ENCODE measurements at regions of chr19 and their contacts with region 1.

Region 1: DNA sequence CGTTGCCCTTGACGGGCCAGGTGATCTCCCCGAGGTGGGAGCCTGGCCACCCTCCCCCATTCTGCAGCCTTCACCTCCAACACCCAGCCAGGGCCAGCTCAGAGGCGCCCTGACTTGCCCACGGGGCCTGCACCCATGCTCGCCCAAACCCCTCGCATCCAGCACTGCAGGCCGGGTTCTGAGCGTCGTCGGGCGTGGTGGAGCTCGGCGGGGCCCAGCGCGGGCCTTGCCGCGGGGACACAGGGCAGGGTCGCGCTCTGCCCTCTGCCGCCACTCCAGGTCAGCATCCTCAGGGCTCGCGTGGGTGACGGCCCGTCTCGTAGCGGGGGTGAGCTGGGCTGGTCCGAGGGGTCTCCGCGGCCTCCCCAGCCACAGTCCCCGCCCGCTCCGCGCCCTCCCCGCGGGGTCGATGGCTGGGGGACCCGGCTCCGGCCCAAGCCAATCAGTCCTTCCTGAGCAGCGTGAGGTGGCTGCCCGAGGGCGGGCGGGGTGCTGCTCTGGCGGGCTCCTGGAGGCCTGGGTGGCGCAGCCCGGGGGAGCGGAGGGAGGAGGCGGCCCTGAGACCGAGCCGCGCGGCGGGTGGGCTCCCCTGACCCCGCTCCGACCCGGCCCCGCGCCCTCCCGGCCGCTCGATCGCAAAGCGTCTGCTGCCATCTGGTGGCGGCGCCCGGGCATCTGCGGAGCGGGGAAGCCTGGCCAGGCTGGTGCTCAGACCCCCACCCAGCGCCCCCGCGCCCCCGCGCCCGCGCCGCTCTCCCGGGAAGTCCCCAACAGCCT is 61.4 kb downstream of the CCNE1 start:
- DNase-seq: peak; percentile 83
- ATAC-seq: peak; percentile 88
- H3K4me3 ChIP-seq: peak overlapping the region in 4 of 5 experiments; percentile 31 to 67 (median 54)
- H3K4me3 Mint-ChIP-seq: peak overlapping the region; percentile 84
- H3K27ac ChIP-seq: no peak overlapping the region
- H3K27ac Mint-ChIP-seq: no peak overlapping the region
- H3K4me1 ChIP-seq: peaks cover 17 to 44% of the 10 kb centered on the region in 2 donors
- H3K4me1 Mint-ChIP-seq: peaks cover 13% of the 10 kb centered on the region
- H3K27me3 ChIP-seq: peaks cover 0 to 27% (median 6%) of the 10 kb centered on the region in 4 experiments
- H3K27me3 Mint-ChIP-seq: peaks cover 23% of the 10 kb centered on the region
- CTCF ChIP-seq: peak; percentile 95

Region 2: DNA sequence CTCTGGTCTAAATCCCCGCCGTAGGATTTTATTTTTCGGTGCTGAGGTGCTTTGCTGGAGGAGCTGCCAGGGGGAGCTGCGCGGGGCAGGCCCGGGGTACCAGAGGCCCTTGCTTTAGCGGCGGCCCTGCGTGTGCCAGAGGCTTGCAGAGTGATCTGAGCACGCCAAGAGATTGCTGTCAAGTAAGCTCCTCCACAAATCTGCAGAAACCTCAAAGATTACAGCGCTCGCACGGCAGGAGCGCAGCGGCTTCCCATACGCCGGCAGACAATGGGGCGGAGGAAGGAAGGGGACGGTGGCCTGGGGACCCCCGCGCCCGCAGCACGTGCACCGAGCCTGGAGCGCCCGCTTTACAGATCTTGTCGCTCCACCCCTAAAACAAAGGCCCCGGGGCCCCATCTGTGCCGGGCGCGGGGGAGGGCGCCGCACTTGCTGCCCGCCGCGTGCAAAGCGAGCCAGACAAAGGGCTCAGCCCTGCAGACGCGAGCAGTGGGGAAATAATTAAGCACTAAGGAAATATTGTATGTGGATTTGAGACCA is 149.0 kb before region 1 on chr19:
- CTCF ChIA-PET with region 1: interaction called, 18 read pairs
- POLR2A ChIA-PET with region 1: no interaction called
- intact Hi-C with region 1: no loop called
- DNase-seq: peak; percentile 32
- ATAC-seq: no peak
- H3K4me3 ChIP-seq: peak overlapping the region in 2 of 5 experiments; percentile 9 to 10
- H3K4me3 Mint-ChIP-seq: peak overlapping the region; percentile 41
- H3K27ac ChIP-seq: no peak overlapping the region
- H3K27ac Mint-ChIP-seq: no peak overlapping the region
- H3K4me1 ChIP-seq: peaks cover 8 to 12% of the 10 kb centered on the region in 2 donors
- H3K4me1 Mint-ChIP-seq: peaks cover 8% of the 10 kb centered on the region
- H3K27me3 ChIP-seq: peaks cover 0 to 38% (median 15%) of the 10 kb centered on the region in 4 experiments
- H3K27me3 Mint-ChIP-seq: peaks cover 43% of the 10 kb centered on the region
- CTCF ChIP-seq: no peak

Region 3: DNA sequence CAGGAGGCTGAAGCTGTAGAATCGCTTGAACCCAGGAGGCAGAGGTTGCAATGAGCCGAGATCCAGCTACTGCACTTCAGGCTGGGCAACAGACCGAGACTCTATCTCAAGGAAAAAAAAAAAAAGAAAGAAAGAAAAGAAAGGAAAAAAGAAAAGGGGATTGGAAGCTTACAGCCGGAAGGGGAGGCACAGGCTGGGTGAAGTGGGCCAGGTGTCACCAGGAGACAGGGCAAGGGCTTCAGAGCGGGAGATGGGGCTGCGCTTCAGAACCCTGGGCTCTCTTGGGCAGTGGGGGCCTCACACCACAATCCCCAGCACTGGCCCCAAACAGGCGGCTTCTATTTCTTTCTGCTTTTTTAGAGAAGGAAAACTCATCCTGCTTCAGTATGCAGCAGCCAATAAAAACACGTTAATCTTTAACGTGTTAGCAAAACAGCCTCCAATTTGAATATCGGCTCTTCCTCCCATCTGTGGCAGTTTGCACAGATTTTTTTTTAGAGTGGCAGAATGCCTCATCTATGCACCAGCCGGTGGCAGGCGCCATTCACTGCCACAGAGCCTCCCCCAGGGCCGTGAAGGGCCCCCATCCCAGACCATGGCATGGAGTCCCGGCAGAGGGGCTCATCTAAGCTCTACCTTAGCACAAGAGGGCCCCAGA is 111.5 kb before region 1 on chr19:
- CTCF ChIA-PET with region 1: interaction called, 71 read pairs
- POLR2A ChIA-PET with region 1: no interaction called
- intact Hi-C with region 1: loop called (anchors 1 kb)
- DNase-seq: no peak
- ATAC-seq: no peak
- H3K4me3 ChIP-seq: no peak overlapping the region
- H3K4me3 Mint-ChIP-seq: no peak overlapping the region
- H3K27ac ChIP-seq: no peak overlapping the region
- H3K27ac Mint-ChIP-seq: no peak overlapping the region
- H3K4me1 ChIP-seq: peaks cover 8% of the 10 kb centered on the region in 2 donors
- H3K4me1 Mint-ChIP-seq: peaks cover 3% of the 10 kb centered on the region
- H3K27me3 ChIP-seq: peaks cover 0 to 6% (median 0%) of the 10 kb centered on the region in 4 experiments
- H3K27me3 Mint-ChIP-seq: peaks cover 13% of the 10 kb centered on the region
- CTCF ChIP-seq: no peak

Region 4: GRCh38 chr19:29893606-29894284 is 20.5 kb after region 1 on chr19:
- CTCF ChIA-PET with region 1: no interaction called
- POLR2A ChIA-PET with region 1: no interaction called
- intact Hi-C with region 1: no loop called
- DNase-seq: no peak
- ATAC-seq: no peak
- H3K4me3 ChIP-seq: no peak overlapping the region
- H3K4me3 Mint-ChIP-seq: no peak overlapping the region
- H3K27ac ChIP-seq: no peak overlapping the region
- H3K27ac Mint-ChIP-seq: no peak overlapping the region
- H3K4me1 ChIP-seq: no peaks in the 10 kb centered on the region
- H3K4me1 Mint-ChIP-seq: no peaks in the 10 kb centered on the region
- H3K27me3 ChIP-seq: no peaks in the 10 kb centered on the region
- H3K27me3 Mint-ChIP-seq: peaks cover 6% of the 10 kb centered on the region
- CTCF ChIP-seq: no peak

Region 5: DNA sequence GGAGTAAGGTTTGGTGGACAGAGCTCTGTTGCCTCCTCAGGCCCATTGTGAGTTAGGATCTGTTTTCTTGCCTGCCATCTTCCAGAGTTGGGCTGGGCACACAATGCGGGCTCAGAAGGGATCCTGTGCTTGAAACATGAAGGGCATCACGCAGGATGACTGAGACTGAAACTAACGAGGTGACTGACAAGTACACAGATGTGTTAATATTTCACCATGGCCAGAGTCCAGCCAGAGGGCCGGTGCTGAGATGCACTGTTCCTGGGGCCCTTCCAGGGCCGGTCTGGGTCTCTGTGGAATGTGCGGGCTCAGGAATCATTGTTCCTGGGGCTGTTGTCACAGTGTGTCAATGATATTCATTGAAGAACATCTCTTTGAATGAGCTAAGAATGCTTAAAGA is 232.5 kb after region 1 on chr19:
- CTCF ChIA-PET with region 1: no interaction called
- POLR2A ChIA-PET with region 1: no interaction called
- intact Hi-C with region 1: no loop called
- DNase-seq: no peak
- ATAC-seq: no peak
- H3K4me3 ChIP-seq: no peak overlapping the region
- H3K4me3 Mint-ChIP-seq: no peak overlapping the region
- H3K27ac ChIP-seq: no peak overlapping the region
- H3K27ac Mint-ChIP-seq: no peak overlapping the region
- H3K4me1 ChIP-seq: no peaks in the 10 kb centered on the region
- H3K4me1 Mint-ChIP-seq: no peaks in the 10 kb centered on the region
- H3K27me3 ChIP-seq: no peaks in the 10 kb centered on the region
- H3K27me3 Mint-ChIP-seq: peaks cover 2% of the 10 kb centered on the region
- CTCF ChIP-seq: no peak

Measured in B cell (primary cell).